ENCODE measurements at regions of chr16 and their contacts with region 1.

Region 1: GRCh38 chr16:13231365-13231764 is 330.0 kb downstream of the SHISA9 start:
- DNase-seq: no peak
- ATAC-seq: no peak
- H3K4me3 ChIP-seq: no peak overlapping the region
- H3K27ac ChIP-seq: no peak overlapping the region
- H3K4me1 ChIP-seq: no peaks in the 10 kb centered on the region
- H3K27me3 ChIP-seq: peaks cover 0 to 8% (median 0%) of the 10 kb centered on the region in 7 donors
- CTCF ChIP-seq: no peak

Region 2: DNA sequence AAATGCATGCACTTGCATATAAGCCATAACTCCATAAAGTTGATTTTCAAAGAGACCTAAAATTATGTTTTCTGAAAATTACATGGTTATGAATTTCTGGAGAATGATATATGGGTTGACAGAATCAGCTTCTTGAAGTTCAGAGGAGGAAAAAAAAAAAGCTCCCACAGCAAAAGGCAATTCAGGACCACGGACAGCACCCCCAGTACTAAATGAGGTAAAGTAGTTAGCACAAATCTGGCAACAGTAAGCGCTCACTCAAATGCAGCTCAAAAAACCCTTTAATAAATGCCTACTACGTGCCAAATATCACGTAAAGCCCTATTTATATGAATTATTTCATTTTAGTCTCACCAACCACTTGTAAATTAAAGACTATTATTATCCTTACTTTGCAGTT is 194.8 kb before region 1 on chr16:
- intact Hi-C with region 1: no loop called
- DNase-seq: peak; percentile 23 to 37
- ATAC-seq: no peak
- H3K4me3 ChIP-seq: no peak overlapping the region
- H3K27ac ChIP-seq: no peak overlapping the region
- H3K4me1 ChIP-seq: no peaks in the 10 kb centered on the region
- H3K27me3 ChIP-seq: peaks cover 0 to 3% (median 0%) of the 10 kb centered on the region in 7 donors
- CTCF ChIP-seq: no peak

Region 3: DNA sequence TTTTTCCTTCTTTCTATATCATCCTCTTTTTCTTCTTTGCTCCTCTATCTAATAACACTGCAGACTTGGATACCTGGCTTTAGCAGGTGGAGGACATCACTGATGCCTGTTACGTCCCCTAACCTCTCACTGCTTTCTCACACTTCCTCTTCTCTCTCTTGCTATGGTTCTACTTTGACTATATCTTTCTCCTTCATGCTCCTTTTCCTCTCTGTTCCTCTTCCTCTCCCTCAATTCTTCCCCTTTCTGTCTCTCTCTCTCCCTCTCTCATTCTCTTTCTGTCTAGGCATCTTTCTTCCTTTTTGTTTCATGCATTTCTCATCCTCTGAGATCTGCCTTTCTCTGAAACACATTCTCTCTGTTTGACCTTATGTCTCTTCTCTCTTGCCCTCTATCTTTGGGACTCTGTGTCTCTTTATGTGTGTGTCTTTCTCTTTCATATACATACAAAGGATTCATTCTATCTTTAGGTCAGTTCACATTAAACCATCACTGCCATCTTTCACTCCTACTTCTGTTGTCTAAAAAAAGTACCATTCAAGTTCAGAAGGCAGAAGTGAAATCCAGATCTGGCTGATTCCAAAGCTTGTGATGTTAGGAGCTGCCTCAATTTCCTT is 23.7 kb after region 1 on chr16:
- intact Hi-C with region 1: loop called in 1 of 10 experiments (anchors 1 kb)
- DNase-seq: no peak
- ATAC-seq: no peak
- H3K4me3 ChIP-seq: no peak overlapping the region
- H3K27ac ChIP-seq: no peak overlapping the region
- H3K4me1 ChIP-seq: no peaks in the 10 kb centered on the region
- H3K27me3 ChIP-seq: peaks cover 0 to 6% (median 0%) of the 10 kb centered on the region in 7 donors
- CTCF ChIP-seq: no peak

Region 4: DNA sequence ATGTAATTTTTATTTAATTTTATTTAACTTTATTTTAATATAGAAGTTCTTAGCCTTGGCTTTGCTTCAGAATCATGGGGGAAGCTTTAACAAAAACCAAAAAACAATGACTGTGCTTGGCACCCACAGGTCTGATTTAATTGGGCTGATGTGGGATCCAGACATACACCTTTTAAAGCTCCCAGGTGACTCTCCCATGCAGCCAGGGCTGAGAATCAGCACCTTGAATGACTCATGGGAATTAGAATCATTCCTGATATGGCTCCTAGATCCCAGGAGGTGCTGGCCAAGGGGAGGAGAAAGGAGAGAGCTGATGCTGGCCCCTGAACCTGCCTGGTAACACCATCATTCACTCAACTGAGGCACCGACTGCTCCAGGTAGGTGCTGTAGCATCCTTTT is 1158.0 kb after region 1 on chr16:
- intact Hi-C with region 1: loop called in 1 of 10 experiments (anchors 10 kb)
- DNase-seq: no peak
- ATAC-seq: no peak
- H3K4me3 ChIP-seq: no peak overlapping the region
- H3K27ac ChIP-seq: no peak overlapping the region
- H3K4me1 ChIP-seq: no peaks in the 10 kb centered on the region
- H3K27me3 ChIP-seq: no peaks in the 10 kb centered on the region
- CTCF ChIP-seq: no peak

Measured in heart right ventricle (tissue), 16 donors.